ENCODE measurements at regions of chr20 and their contacts with region 1.

Region 1: GRCh38 chr20:38057351-38057972 is 23.9 kb downstream of the RPRD1B start:
- DNase-seq: peak; percentile 82 to 90 (median 83)
- ATAC-seq: peak; percentile 62
- H3K4me3 ChIP-seq: no peak overlapping the region
- H3K27ac ChIP-seq: no peak overlapping the region
- H3K4me1 ChIP-seq: peaks cover 5% of the 10 kb centered on the region
- H3K27me3 ChIP-seq: no peaks in the 10 kb centered on the region
- CTCF ChIP-seq: peak; percentile 69 to 76 (median 70)
- POLR2A ChIP-seq: no peak

Region 2: GRCh38 chr20:37020636-37021035 is 1036.8 kb before region 1 on chr20:
- intact Hi-C with region 1: no loop called
- DNase-seq: no peak
- ATAC-seq: no peak
- H3K4me3 ChIP-seq: no peak overlapping the region
- H3K27ac ChIP-seq: no peak overlapping the region
- H3K4me1 ChIP-seq: no peaks in the 10 kb centered on the region
- H3K27me3 ChIP-seq: no peaks in the 10 kb centered on the region
- CTCF ChIP-seq: no peak
- POLR2A ChIP-seq: no peak

Region 3: GRCh38 chr20:38165089-38165989 is 107.9 kb after region 1 on chr20 and contains the start of gene TGM2:
- intact Hi-C with region 1: loop called (anchors 5 kb)
- DNase-seq: peak; percentile 80 to 85 (median 84)
- ATAC-seq: peak; percentile 92
- H3K4me3 ChIP-seq: no peak within 1 kb of the TSS
- H3K27ac ChIP-seq: peak within 1 kb of the TSS in 2 of 4 donors; percentile 10 to 33
- H3K4me1 ChIP-seq: peaks cover 13% of the 10 kb centered on the region
- H3K27me3 ChIP-seq: no peaks in the 10 kb centered on the region
- CTCF ChIP-seq: peak; percentile 83 to 96 (median 93)
- POLR2A ChIP-seq: no peak
- total RNA-seq, gene TGM2: 17.1 to 27.5 TPM

Region 4: DNA sequence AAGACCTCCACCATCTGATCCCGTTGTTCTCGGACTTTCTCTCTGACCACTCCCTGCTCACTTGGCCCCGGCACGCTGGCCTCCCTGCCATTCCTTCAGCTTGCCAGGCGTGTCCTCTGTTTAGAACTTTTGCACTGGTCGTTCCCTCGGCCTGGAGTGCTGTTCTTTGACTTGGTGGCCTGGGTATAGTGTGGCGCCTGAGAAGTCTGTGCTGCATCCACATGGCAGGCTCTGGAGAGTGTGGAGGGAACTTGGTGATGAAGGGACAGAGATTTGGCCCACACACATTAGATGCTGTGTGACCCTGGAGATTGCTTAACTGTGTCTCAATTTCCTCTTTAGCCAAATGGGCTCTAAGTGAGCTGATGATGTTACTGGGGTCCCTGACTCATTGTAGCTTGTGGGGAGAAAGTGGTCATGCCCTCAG is 120.6 kb after region 1 on chr20:
- intact Hi-C with region 1: no loop called
- DNase-seq: no peak
- ATAC-seq: no peak
- H3K4me3 ChIP-seq: no peak overlapping the region
- H3K27ac ChIP-seq: no peak overlapping the region
- H3K4me1 ChIP-seq: no peaks in the 10 kb centered on the region
- H3K27me3 ChIP-seq: no peaks in the 10 kb centered on the region
- CTCF ChIP-seq: no peak
- POLR2A ChIP-seq: no peak

Region 5: GRCh38 chr20:38217791-38218575 is 160.5 kb after region 1 on chr20:
- intact Hi-C with region 1: loop called (anchors 5 kb)
- DNase-seq: peak; percentile 25 to 51 (median 30)
- ATAC-seq: peak; percentile 54
- H3K4me3 ChIP-seq: no peak overlapping the region
- H3K27ac ChIP-seq: no peak overlapping the region
- H3K4me1 ChIP-seq: no peaks in the 10 kb centered on the region
- H3K27me3 ChIP-seq: no peaks in the 10 kb centered on the region
- CTCF ChIP-seq: no peak
- POLR2A ChIP-seq: no peak

Measured in body of pancreas (tissue), 4 donors.